ENCODE measurements at regions of chr22 and their contacts with region 1.

Region 1: DNA sequence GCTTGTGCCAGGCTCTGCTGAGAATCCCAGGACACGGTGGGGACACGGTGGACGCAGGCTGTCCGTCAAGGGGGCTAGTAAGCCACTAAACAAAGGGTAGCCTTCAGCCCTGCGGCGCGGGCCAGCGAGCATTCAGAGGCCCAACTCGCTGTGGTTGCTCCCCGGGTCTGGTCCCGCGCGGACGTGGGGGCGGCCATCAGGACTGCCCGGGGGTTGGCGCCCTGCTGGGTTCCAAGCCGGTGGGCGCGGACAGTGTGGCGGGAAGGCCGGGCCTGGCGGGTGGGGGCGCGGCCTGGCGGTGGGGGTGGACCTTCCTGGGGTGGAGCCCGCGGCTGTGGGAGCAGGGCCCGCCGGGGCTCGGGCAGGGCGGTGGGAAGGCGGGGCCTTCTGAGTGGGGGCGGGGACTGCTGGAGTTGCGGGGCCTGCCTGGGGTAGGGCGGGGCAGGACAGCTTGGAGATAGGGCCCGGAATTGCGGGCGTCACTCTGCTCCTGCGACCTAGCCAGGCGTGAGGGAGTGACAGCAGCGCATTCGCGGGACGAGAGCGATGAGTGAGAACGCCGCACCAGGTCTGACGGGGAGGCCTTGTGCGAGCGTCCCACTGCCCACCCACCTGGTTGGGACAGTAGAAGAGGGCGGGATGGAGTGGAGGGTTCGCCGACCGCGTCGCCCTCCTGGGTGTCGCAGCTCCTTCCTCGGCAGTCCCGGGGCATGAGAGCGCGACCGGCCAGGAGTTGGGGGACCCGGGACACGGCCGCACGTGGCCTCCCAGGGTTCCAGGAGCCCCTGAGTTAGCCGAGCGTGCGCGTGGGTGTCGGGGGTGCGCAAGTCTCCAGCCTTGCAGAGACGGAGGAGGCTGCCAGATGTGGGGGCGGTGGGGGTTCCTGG is at the start of gene SERHL2:
- DNase-seq: peak; percentile 92
- ATAC-seq: peak; percentile 95
- H3K4me3 ChIP-seq: peak within 1 kb of the TSS in 4 of 5 experiments; percentile 65 to 73 (median 70)
- H3K4me3 Mint-ChIP-seq: peak within 1 kb of the TSS; percentile 93
- H3K27ac ChIP-seq: peak within 1 kb of the TSS; percentile 62 to 69
- H3K27ac Mint-ChIP-seq: peak within 1 kb of the TSS; percentile 75
- H3K4me1 ChIP-seq: peaks cover 39 to 50% of the 10 kb centered on the region in 2 donors
- H3K4me1 Mint-ChIP-seq: peaks cover 46% of the 10 kb centered on the region
- H3K27me3 ChIP-seq: no peaks in the 10 kb centered on the region
- H3K27me3 Mint-ChIP-seq: no peaks in the 10 kb centered on the region
- CTCF ChIP-seq: no peak
- total RNA-seq, gene SERHL2: 5.0 and 5.5 TPM in 2 replicates

Region 2: GRCh38 chr22:42399315-42400271 is 154.1 kb before region 1 on chr22:
- CTCF ChIA-PET with region 1: no interaction called
- POLR2A ChIA-PET with region 1: no interaction called
- intact Hi-C with region 1: no loop called
- DNase-seq: peak; percentile 51
- ATAC-seq: no peak
- H3K4me3 ChIP-seq: no peak overlapping the region
- H3K4me3 Mint-ChIP-seq: peak overlapping the region; percentile 67
- H3K27ac ChIP-seq: no peak overlapping the region
- H3K27ac Mint-ChIP-seq: peak overlapping the region; percentile 81
- H3K4me1 ChIP-seq: peaks cover 40 to 46% of the 10 kb centered on the region in 2 donors
- H3K4me1 Mint-ChIP-seq: peaks cover 49% of the 10 kb centered on the region
- H3K27me3 ChIP-seq: no peaks in the 10 kb centered on the region
- H3K27me3 Mint-ChIP-seq: no peaks in the 10 kb centered on the region
- CTCF ChIP-seq: no peak

Region 3: GRCh38 chr22:42500161-42500835 is 53.4 kb before region 1 on chr22:
- CTCF ChIA-PET with region 1: no interaction called
- POLR2A ChIA-PET with region 1: no interaction called
- intact Hi-C with region 1: loop called (anchors 5 kb)
- DNase-seq: peak; percentile 91
- ATAC-seq: peak; percentile 89
- H3K4me3 ChIP-seq: peak overlapping the region in 4 of 5 experiments; percentile 41 to 60 (median 50)
- H3K4me3 Mint-ChIP-seq: peak overlapping the region; percentile 83
- H3K27ac ChIP-seq: no peak overlapping the region
- H3K27ac Mint-ChIP-seq: peak overlapping the region; percentile 37
- H3K4me1 ChIP-seq: peaks cover 12 to 14% of the 10 kb centered on the region in 2 donors
- H3K4me1 Mint-ChIP-seq: peaks cover 15% of the 10 kb centered on the region
- H3K27me3 ChIP-seq: no peaks in the 10 kb centered on the region
- H3K27me3 Mint-ChIP-seq: no peaks in the 10 kb centered on the region
- CTCF ChIP-seq: no peak

Region 4: GRCh38 chr22:42520663-42521546 is 32.8 kb before region 1 on chr22:
- CTCF ChIA-PET with region 1: interaction called, 3 read pairs
- POLR2A ChIA-PET with region 1: interaction called, 4 read pairs
- intact Hi-C with region 1: loop called (anchors 2 kb)
- DNase-seq: no peak
- ATAC-seq: no peak
- H3K4me3 ChIP-seq: no peak overlapping the region
- H3K4me3 Mint-ChIP-seq: peak overlapping the region; percentile 98
- H3K27ac ChIP-seq: no peak overlapping the region
- H3K27ac Mint-ChIP-seq: peak overlapping the region; percentile 76
- H3K4me1 ChIP-seq: peaks cover 3 to 18% of the 10 kb centered on the region in 2 donors
- H3K4me1 Mint-ChIP-seq: peaks cover 17% of the 10 kb centered on the region
- H3K27me3 ChIP-seq: no peaks in the 10 kb centered on the region
- H3K27me3 Mint-ChIP-seq: no peaks in the 10 kb centered on the region
- CTCF ChIP-seq: no peak

Region 5: GRCh38 chr22:42528258-42528948 is 25.3 kb before region 1 on chr22:
- CTCF ChIA-PET with region 1: interaction called, 86 read pairs
- POLR2A ChIA-PET with region 1: interaction called, 20 read pairs
- intact Hi-C with region 1: loop called (anchors 1 kb)
- DNase-seq: no peak
- ATAC-seq: no peak
- H3K4me3 ChIP-seq: no peak overlapping the region
- H3K4me3 Mint-ChIP-seq: no peak overlapping the region
- H3K27ac ChIP-seq: no peak overlapping the region
- H3K27ac Mint-ChIP-seq: peak overlapping the region; percentile 64
- H3K4me1 ChIP-seq: peaks cover under 1 to 18% of the 10 kb centered on the region in 2 donors
- H3K4me1 Mint-ChIP-seq: peaks cover 26% of the 10 kb centered on the region
- H3K27me3 ChIP-seq: no peaks in the 10 kb centered on the region
- H3K27me3 Mint-ChIP-seq: no peaks in the 10 kb centered on the region
- CTCF ChIP-seq: no peak

Region 6: DNA sequence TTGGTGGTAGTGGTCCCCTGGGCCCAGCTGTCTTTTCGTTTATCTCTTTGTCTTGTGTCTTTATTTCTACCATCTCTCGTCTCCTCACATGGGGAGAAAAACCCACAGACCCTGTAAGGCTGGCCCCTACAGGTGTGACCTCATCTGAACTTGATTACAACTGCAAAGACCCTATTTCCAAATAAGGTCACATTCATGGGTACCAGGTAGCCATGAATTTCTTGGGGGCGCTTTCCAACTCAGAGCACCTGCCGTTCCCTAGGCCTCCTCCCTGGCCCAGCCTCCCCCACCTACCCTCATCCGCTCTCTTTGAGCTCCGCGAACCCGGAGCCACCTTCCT is 20.1 kb before region 1 on chr22:
- CTCF ChIA-PET with region 1: interaction called, 86 read pairs
- POLR2A ChIA-PET with region 1: interaction called, 20 read pairs
- intact Hi-C with region 1: loop called (anchors 1 kb)
- DNase-seq: no peak
- ATAC-seq: no peak
- H3K4me3 ChIP-seq: peak overlapping the region in 4 of 5 experiments; percentile 37 to 54 (median 53)
- H3K4me3 Mint-ChIP-seq: peak overlapping the region; percentile 90
- H3K27ac ChIP-seq: peak overlapping the region; percentile 92 to 93
- H3K27ac Mint-ChIP-seq: peak overlapping the region; percentile 97
- H3K4me1 ChIP-seq: peaks cover 38 to 66% of the 10 kb centered on the region in 2 donors
- H3K4me1 Mint-ChIP-seq: peaks cover 67% of the 10 kb centered on the region
- H3K27me3 ChIP-seq: no peaks in the 10 kb centered on the region
- H3K27me3 Mint-ChIP-seq: no peaks in the 10 kb centered on the region
- CTCF ChIP-seq: no peak

Region 7: DNA sequence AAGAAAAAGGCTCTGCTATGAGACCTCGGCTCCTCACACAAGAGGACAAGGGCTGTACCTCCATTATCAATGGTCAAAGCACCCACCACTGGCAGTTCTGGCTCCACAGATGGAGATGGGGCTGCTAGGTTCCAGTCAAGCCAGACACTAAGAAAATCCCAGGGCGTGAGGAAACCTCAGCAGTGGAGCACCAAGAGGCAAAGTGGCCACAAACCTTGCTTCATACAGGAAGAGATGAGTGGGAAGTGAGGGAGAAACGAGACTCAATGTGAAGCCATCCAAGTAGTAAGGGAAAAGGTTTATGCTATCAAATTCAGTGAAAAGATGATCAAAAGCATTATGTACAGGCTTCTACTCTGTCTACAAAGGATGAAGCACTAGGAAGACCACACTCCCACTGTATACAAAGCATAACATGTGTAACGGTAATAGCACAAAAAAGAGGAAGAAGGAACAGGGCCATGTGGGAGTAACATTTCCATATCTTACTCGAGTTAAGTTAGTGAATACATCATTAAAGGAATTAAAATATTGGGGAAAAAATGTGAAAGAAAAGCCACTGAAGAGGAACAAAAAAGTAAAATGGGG is 34.0 kb after region 1 on chr22:
- CTCF ChIA-PET with region 1: no interaction called
- POLR2A ChIA-PET with region 1: no interaction called
- intact Hi-C with region 1: no loop called
- DNase-seq: no peak
- ATAC-seq: no peak
- H3K4me3 ChIP-seq: no peak overlapping the region
- H3K4me3 Mint-ChIP-seq: no peak overlapping the region
- H3K27ac ChIP-seq: no peak overlapping the region
- H3K27ac Mint-ChIP-seq: peak overlapping the region; percentile 34
- H3K4me1 ChIP-seq: no peaks in the 10 kb centered on the region
- H3K4me1 Mint-ChIP-seq: peaks cover 6% of the 10 kb centered on the region
- H3K27me3 ChIP-seq: no peaks in the 10 kb centered on the region
- H3K27me3 Mint-ChIP-seq: no peaks in the 10 kb centered on the region
- CTCF ChIP-seq: no peak

Measured in B cell (primary cell).